Tibial artery (tissue), 4 donors: ENCODE measurements at regions of chr1 and their contacts with region 1.

Region 1: DNA sequence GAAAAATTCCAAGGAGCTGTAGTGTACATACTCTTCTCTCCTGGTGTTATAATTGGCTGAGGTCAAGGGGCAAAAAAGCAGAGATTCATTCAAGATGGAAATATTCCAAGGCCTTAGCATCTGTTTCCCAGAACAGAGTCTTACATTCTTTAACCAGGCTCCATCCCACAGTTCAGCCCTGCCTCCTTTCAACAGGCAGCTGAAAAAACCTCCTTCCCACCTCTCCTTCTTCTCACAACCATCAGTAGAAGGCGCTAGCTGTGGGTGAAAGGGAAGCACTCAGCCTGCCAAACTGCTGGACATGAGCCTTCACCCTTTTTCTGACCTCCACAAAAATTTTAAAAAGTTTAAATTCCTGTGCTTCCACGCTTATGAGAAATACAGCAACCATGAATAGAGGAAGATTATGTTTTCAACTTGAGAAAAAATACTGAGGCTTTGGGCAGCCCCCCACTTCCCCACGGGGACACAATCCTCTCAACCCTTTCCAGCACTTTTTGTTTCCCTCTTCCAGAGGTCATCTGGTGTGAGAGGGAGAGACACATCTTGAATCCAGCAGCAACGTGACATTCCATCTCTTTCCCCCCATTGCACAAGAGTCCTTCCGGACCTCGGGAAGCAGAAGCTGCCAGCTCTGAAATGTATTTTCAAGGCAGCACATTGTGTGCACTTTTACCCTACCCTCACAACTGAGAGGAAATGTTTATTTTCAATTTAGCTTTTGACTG is 43.2 kb upstream of the FMO2 start:
- DNase-seq: peak; percentile 81 to 86
- H3K4me3 ChIP-seq: peak overlapping the region in 1 of 2 donors; percentile 16
- H3K27ac ChIP-seq: peak overlapping the region; percentile 78 to 83
- H3K4me1 ChIP-seq: peaks cover 0 to 72% (median 42%) of the 10 kb centered on the region in 4 donors
- H3K27me3 ChIP-seq: no peaks in the 10 kb centered on the region
- CTCF ChIP-seq: peak in 1 of 2 experiments; percentile 36

Region 2: DNA sequence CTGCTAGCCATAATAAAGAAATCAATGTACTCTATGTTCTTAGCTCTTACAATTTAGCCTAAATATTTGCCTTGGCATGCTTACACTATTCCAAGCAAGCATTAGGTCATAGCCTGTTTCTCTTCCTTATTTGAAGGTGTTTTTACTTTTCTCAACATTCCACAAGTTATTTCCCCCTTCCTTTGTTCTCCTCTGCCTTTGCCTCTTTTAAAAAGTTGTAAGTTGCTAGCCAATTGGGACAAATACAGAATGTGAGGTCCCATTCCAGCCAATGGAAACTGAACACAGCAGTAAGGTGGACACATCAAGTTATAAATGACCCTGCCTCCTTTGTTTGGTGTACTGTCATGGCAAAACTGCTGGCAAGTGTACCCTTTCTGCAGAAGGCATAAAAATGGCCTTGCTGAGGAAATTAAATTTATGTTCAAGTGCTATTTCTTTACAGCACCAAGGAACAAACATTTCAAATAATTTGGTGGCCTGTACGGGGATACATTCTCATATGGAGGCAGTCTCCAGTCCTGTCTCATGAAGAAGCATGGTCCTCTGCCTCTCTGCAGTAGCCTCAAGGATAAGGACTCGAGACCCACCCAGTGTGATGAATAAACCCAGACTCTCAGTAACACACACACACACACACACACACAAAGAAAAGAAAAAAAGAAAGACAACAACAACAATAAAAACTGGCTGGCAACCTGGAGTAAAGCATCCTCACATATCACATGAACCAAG is 77.7 kb after region 1 on chr1:
- intact Hi-C with region 1: loop called (anchors 10 kb)
- DNase-seq: no peak
- H3K4me3 ChIP-seq: no peak overlapping the region
- H3K27ac ChIP-seq: peak overlapping the region; percentile 74 to 82
- H3K4me1 ChIP-seq: peaks cover 0 to 69% (median 48%) of the 10 kb centered on the region in 4 donors
- H3K27me3 ChIP-seq: no peaks in the 10 kb centered on the region
- CTCF ChIP-seq: no peak